IMR-90 (cell line): ENCODE measurements at regions of chr1 and their contacts with region 1.

Region 1: DNA sequence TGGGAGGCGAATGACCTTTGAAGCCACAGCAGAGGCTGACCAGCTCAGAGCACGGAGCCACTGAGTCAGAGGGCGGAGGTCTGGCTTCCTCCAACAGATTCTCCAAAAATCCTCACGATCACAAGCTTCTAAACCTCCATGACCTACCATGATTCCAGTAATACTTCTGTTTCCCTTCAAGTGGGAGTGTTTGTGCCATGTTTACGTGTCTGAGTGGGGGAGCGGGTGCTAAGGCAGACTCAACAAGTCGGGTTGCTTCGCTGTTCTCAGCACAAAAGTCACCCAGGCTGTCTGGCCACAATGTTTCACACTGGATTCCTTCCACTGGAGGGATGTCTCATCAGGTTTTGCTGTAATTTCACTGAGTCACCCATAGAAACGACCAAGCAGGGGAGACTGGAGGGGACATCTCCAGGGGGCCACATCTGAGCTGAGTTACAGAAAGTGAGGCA is 86.2 kb downstream of the SLC66A1 start:
- DNase-seq: peak; percentile 99
- ATAC-seq: peak; percentile 87
- H3K4me3 ChIP-seq: no peak overlapping the region
- H3K27ac ChIP-seq: peak overlapping the region; percentile 56
- H3K4me1 ChIP-seq: peaks cover 46% of the 10 kb centered on the region
- H3K27me3 ChIP-seq: no peaks in the 10 kb centered on the region
- CTCF ChIP-seq: peak; percentile 74
- POLR2A ChIP-seq: no peak; the same call in 1 of the 2 replicates
- RAD21 ChIP-seq: peak; percentile 59

Region 2: GRCh38 chr1:19353596-19353995 is 44.7 kb before region 1 on chr1:
- CTCF ChIA-PET with region 1: no interaction called
- POLR2A ChIA-PET with region 1: no interaction called
- dilution Hi-C with region 1: no loop called
- in situ Hi-C with region 1: no loop called
- intact Hi-C with region 1: no loop called
- DNase-seq: no peak
- ATAC-seq: no peak
- H3K4me3 ChIP-seq: no peak overlapping the region
- H3K27ac ChIP-seq: no peak overlapping the region
- H3K4me1 ChIP-seq: peaks cover 2% of the 10 kb centered on the region; the same call in 1 of the 2 replicates
- H3K27me3 ChIP-seq: no peaks in the 10 kb centered on the region
- CTCF ChIP-seq: no peak
- POLR2A ChIP-seq: no peak
- RAD21 ChIP-seq: no peak

Region 3: GRCh38 chr1:19427087-19427781 is 28.9 kb after region 1 on chr1:
- CTCF ChIA-PET with region 1: interaction called, 3 read pairs
- POLR2A ChIA-PET with region 1: interaction called, 3 read pairs
- dilution Hi-C with region 1: no loop called
- in situ Hi-C with region 1: no loop called
- intact Hi-C with region 1: loop called (anchors 1 kb)
- DNase-seq: peak; percentile 87
- ATAC-seq: peak; percentile 74
- H3K4me3 ChIP-seq: no peak overlapping the region
- H3K27ac ChIP-seq: peak overlapping the region; percentile 93
- H3K4me1 ChIP-seq: peaks cover 49% of the 10 kb centered on the region
- H3K27me3 ChIP-seq: no peaks in the 10 kb centered on the region
- CTCF ChIP-seq: no peak
- POLR2A ChIP-seq: no peak
- RAD21 ChIP-seq: no peak

Region 4: DNA sequence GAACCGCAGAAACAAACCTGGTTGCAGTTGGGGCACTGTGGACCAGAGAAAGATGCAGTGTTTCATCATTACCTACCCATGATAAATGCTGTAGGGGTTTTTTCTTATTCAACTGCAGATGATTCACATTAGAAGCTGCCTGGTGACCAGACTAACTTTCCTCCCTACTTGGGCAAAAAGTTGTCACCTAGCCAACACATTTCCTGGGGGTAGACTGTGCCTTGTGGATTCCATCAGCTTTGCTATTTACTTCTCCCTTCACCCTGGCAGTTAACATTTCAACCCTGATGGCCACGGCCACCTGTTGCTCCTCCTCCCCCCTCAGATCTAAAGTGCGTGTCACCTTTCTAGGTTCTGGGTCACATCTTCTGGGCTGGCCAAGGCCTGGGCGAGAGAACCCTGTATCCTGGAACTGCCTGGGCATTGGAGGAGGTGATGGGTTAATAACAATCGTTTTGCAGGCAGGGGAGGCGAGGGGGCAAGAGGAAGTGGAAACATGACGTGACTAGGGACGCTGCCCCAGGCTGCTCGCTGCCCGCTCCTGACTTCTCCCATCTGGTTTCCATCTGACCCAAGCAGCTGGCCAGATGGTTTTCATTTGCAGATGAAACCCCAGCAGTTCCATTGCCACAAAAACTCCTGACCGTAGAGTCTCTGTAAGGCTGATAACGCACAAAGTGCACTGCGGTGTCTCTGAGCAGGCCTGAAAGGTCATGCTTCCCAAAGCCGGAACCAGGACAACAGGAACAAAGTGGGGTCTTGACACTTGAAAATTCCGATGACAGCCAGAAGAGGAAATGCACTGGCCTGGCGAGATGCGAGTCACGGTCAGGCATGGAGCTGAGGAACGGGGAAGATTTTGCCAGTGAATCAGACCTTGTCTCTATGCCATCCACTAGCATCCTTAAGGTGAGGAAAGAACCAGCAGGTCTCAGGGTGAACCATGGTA is 50.4 kb after region 1 on chr1:
- CTCF ChIA-PET with region 1: no interaction called
- POLR2A ChIA-PET with region 1: interaction called, 3 read pairs
- dilution Hi-C with region 1: no loop called
- in situ Hi-C with region 1: no loop called
- intact Hi-C with region 1: loop called (anchors 1 kb)
- DNase-seq: peak; percentile 93
- ATAC-seq: peak; percentile 53
- H3K4me3 ChIP-seq: no peak overlapping the region
- H3K27ac ChIP-seq: peak overlapping the region; percentile 87
- H3K4me1 ChIP-seq: peaks cover 51% of the 10 kb centered on the region
- H3K27me3 ChIP-seq: no peaks in the 10 kb centered on the region
- CTCF ChIP-seq: no peak
- POLR2A ChIP-seq: no peak
- RAD21 ChIP-seq: peak; percentile 23

Region 5: DNA sequence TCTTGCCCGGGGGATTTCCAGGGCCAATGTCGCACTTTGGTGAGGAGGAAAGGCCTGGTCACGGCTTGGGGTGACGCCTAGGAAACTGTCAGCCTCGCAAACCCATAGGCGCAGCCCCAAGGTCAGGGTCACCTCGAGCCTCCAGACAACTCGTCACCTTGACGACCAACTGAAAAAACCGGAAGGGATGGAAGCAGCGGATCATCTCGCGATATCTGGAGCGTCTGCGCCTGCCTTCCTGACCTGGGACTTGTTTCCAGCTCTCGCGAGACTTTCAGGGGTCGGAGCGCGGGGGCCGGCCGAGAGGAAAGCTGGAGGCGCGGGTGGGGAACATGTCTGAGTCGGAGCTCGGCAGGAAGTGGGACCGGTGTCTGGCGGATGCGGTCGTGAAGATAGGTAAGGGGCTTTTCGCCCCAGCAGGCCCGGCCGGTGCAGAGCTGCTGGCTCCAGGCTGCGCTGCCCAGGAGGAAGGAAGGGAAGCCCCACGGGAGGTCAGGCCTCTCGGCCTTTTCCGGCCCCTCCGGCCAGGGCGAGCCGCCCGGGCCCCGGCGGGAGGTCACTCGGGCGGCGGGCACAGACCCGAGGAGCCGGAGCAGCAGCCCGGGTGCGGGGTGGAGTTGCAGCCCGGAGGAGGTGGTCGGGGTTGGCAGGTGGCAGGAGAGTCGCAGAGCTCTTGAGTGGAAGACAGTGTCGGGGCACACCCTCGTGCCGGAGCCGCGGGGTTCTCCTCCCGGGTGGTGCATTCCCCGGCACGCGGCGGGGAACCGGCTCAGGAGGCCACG is 198.6 kb after region 1 on chr1:
- CTCF ChIA-PET with region 1: no interaction called
- POLR2A ChIA-PET with region 1: no interaction called
- dilution Hi-C with region 1: no loop called
- in situ Hi-C with region 1: no loop called
- intact Hi-C with region 1: loop called (anchors 5 kb)
- DNase-seq: peak; percentile 97
- ATAC-seq: peak; percentile 97
- H3K4me3 ChIP-seq: peak overlapping the region; percentile 72
- H3K27ac ChIP-seq: peak overlapping the region; percentile 80
- H3K4me1 ChIP-seq: no peaks in the 10 kb centered on the region
- H3K27me3 ChIP-seq: no peaks in the 10 kb centered on the region
- CTCF ChIP-seq: no peak
- POLR2A ChIP-seq: peak; percentile 88
- RAD21 ChIP-seq: no peak